ENCODE measurements at regions of chr2 and their contacts with region 1.

Region 1: DNA sequence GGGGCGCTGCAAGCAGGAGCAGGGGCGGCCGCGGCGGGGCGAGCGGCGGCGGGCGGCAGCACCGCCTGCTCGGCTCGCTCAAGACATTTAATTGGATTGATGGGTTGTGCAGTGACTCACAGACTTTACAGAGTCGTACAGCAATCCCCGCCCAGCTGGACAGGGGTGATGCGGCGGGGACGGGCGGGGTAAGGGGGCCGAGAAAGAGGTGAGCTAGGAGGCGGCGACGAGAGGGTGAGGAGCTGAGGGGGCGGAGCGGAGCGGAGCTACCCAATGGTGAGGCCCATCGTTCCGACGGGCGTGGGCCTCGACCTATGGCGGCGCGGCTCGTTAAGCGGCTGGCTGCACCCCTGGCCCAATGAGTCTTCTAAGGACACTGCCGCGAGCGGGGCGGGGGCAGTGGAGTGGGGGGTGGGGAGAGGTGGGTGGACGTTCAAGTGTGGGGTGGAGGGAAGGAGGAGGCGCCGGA is 97.1 kb upstream of the SERTAD2 start:
- DNase-seq: peak; percentile 99
- ATAC-seq: peak; percentile 91
- H3K4me3 Mint-ChIP-seq: peak overlapping the region; percentile 80
- H3K27ac Mint-ChIP-seq: peak overlapping the region; percentile 98
- H3K4me1 Mint-ChIP-seq: peaks cover 27% of the 10 kb centered on the region
- H3K27me3 Mint-ChIP-seq: no peaks in the 10 kb centered on the region

Region 2: DNA sequence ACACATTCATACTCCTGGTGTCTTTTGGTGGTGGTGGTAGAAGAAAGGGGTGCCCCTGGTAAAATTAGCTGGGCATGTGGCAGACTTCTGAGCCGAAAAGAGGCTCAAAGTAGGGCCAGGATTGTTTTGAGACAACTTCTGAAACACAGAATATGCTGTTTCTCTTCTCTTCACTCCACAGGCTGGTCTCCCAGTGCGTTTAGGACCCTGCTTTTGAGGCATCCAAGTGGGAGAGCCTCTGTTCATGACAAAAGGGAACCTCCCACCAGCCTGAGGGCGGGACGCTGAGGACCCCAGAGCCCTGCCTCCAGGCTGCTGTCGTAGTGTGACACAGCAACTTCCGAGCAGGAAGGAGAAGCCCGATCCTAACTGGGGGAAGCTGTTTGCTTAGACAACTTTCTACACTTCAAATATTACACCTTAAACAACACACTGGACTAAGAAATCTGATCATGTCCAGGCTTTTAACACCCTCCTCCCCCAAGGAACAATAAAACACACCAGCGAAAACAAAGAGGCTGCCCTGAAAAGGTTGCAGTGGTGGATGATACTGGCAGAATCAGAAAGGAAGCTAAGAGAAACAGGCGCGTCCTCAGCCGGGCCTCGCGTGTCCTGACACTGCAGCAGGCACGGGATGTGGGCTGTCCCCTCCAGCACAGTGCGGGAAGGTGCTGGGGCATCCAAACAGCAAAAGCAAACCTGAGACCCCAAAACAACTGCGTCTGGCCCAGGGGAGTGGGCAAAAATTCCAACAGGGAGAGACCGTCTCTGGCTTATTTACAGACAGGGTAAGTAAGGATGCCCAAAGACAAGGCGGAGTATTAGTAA is 106.5 kb before region 1 on chr2:
- CTCF ChIA-PET with region 1: interaction called, 276 read pairs
- POLR2A ChIA-PET with region 1: interaction called, 144 read pairs
- DNase-seq: peak; percentile 82
- ATAC-seq: peak; percentile 87
- H3K4me3 Mint-ChIP-seq: peak overlapping the region; percentile 83
- H3K27ac Mint-ChIP-seq: peak overlapping the region; percentile 93
- H3K4me1 Mint-ChIP-seq: peaks cover 91% of the 10 kb centered on the region
- H3K27me3 Mint-ChIP-seq: no peaks in the 10 kb centered on the region

Region 3: DNA sequence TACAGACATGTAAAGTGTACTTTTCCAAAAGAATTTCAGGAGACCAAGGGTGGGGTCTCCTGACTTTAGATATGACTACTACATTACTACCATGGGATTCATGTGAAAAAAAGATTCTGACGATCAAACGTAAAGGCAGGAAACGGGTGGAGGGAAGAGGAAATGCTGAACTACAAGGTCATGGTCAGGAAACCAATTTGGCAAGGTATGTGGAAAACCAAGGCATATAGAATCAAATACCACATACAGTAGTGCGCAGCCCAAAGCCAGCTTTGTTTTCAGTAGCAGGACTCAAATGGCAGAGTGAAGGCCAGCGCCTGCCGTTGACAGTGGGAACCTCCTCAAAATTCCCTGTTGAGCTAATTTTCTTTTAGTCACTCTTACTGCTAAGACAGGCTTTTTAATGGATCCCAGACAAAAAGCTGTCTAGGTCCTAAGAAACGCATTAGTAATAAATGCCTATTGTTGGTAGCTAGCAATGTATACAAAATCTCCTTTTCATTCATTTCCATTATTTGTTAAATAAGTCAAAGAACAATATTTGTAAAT is 39.5 kb before region 1 on chr2:
- CTCF ChIA-PET with region 1: interaction called, 12 read pairs
- POLR2A ChIA-PET with region 1: no interaction called
- DNase-seq: peak; percentile 43
- ATAC-seq: peak; percentile 78
- H3K4me3 Mint-ChIP-seq: peak overlapping the region; percentile 6
- H3K27ac Mint-ChIP-seq: peak overlapping the region; percentile 27
- H3K4me1 Mint-ChIP-seq: peaks cover 21% of the 10 kb centered on the region
- H3K27me3 Mint-ChIP-seq: no peaks in the 10 kb centered on the region

Region 4: GRCh38 chr2:64737547-64737946 is 13.3 kb before region 1 on chr2:
- CTCF ChIA-PET with region 1: interaction called, 14 read pairs
- POLR2A ChIA-PET with region 1: interaction called, 27 read pairs
- DNase-seq: no peak
- ATAC-seq: peak; percentile 72
- H3K4me3 Mint-ChIP-seq: peak overlapping the region; percentile 24
- H3K27ac Mint-ChIP-seq: peak overlapping the region; percentile 59
- H3K4me1 Mint-ChIP-seq: peaks cover 51% of the 10 kb centered on the region
- H3K27me3 Mint-ChIP-seq: no peaks in the 10 kb centered on the region

Region 5: GRCh38 chr2:64767670-64768468 is 17.0 kb after region 1 on chr2:
- CTCF ChIA-PET with region 1: interaction called, 42 read pairs
- POLR2A ChIA-PET with region 1: interaction called, 53 read pairs
- DNase-seq: peak; percentile 89
- ATAC-seq: peak; percentile 87
- H3K4me3 Mint-ChIP-seq: peak overlapping the region; percentile 81
- H3K27ac Mint-ChIP-seq: peak overlapping the region; percentile 92
- H3K4me1 Mint-ChIP-seq: peaks cover 34% of the 10 kb centered on the region
- H3K27me3 Mint-ChIP-seq: peaks cover 4% of the 10 kb centered on the region